HAP-1 (cell line): ENCODE measurements at regions of chr9 and their contacts with region 1.

Region 1: DNA sequence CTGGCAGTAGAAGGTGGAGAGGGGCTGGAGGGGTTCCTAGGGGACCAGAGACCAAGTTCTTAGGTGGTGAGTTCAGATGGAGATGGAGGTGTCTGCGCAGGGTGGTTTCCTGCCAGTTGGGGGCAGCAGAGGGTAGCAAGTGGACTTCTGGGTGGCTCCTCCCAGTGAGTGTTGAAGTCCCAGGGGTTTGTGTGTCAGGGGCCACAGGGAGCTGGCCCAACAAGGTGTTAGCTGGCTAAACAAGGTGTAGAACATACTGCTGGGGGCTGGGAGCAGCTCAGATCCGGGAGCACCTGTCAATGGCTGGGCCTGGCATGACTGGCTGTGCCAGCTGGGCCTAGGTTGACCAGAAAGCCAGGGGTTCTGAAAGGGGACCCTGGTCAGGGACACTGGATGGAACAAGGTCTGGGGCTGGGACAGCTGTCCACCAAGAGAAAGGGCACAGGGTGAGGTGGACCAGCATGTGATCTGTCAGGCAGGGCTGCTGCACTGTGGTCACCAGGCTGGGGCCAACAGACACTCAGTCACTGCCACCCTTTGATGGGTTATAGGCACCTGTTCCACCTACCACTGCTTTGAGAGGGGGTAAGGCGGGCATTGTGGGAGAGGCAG is 35.6 kb downstream of the DAB2IP start:
- DNase-seq: peak; percentile 50 to 88
- H3K4me3 ChIP-seq: no peak overlapping the region
- H3K4me1 ChIP-seq: no peaks in the 10 kb centered on the region
- H3K27me3 ChIP-seq: no peaks in the 10 kb centered on the region

Region 2: GRCh38 chr9:121545875-121546423 is 141.1 kb before region 1 on chr9:
- in situ Hi-C with region 1: no loop called
- DNase-seq: peak; percentile 89 to 98
- H3K4me3 ChIP-seq: peak overlapping the region; percentile 19
- H3K4me1 ChIP-seq: peaks cover 7% of the 10 kb centered on the region
- H3K27me3 ChIP-seq: no peaks in the 10 kb centered on the region

Region 3: GRCh38 chr9:121992571-121993212 is 305.7 kb after region 1 on chr9:
- in situ Hi-C with region 1: loop called (anchors 5 kb)
- DNase-seq: peak; percentile 67 to 70
- H3K4me3 ChIP-seq: no peak overlapping the region
- H3K4me1 ChIP-seq: no peaks in the 10 kb centered on the region
- H3K27me3 ChIP-seq: no peaks in the 10 kb centered on the region